H1 (cell line): ENCODE measurements at regions of chr3 and their contacts with region 1.

Region 1: DNA sequence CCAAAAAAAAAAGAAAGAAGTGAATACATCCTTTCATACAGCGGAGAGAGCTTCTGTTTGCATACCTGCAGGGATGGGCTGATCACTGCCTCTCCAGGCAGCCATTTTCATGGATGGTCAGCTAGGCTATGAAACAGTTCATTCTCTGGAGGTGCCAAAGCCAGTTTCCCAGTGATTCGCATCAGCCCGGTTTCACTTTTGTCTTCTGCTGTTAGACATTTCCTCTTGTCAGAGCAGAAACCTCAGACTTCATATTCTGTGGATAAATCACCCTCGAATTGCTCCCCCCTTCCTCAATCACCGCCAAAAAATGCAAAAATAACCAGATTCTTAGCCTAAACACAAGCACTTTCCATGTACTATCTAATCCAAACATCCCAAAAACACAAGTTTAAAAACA is 225.6 kb downstream of the ADAMTS9 start:
- DNase-seq: no peak
- H3K4me3 ChIP-seq: no peak overlapping the region
- H3K27ac ChIP-seq: no peak overlapping the region
- H3K4me1 ChIP-seq: peaks cover 1 to 8% (median 2%) of the 10 kb centered on the region in 4 experiments; a peak in 3 of 7 replicates
- H3K27me3 ChIP-seq: no peaks in the 10 kb centered on the region
- CTCF ChIP-seq: no peak
- EP300 ChIP-seq: no peak
- POLR2A ChIP-seq: no peak
- RAD21 ChIP-seq: no peak

Region 2: GRCh38 chr3:64321747-64322146 is 140.5 kb before region 1 on chr3:
- CTCF ChIA-PET with region 1: interaction called, 11 read pairs
- POLR2A ChIA-PET with region 1: no interaction called
- DNase-seq: no peak
- H3K4me3 ChIP-seq: no peak overlapping the region
- H3K27ac ChIP-seq: no peak overlapping the region
- H3K4me1 ChIP-seq: peaks cover 0 to 3% (median 0%) of the 10 kb centered on the region in 4 experiments; a peak in 2 of 7 replicates
- H3K27me3 ChIP-seq: no peaks in the 10 kb centered on the region
- CTCF ChIP-seq: no peak
- EP300 ChIP-seq: no peak
- POLR2A ChIP-seq: no peak
- RAD21 ChIP-seq: no peak

Region 3: GRCh38 chr3:64431526-64432091 is 30.6 kb before region 1 on chr3:
- CTCF ChIA-PET with region 1: interaction called, 10 read pairs
- POLR2A ChIA-PET with region 1: interaction called, 3 read pairs
- DNase-seq: no peak
- H3K4me3 ChIP-seq: no peak overlapping the region
- H3K27ac ChIP-seq: no peak overlapping the region
- H3K4me1 ChIP-seq: 0 out of 7 replicates have a peak, but pooled peaks cover 0 to 3% (median 0%) of the 10 kb centered on the region in 4 experiments
- H3K27me3 ChIP-seq: no peaks in the 10 kb centered on the region
- CTCF ChIP-seq: no peak
- EP300 ChIP-seq: no peak
- POLR2A ChIP-seq: no peak
- RAD21 ChIP-seq: no peak

Region 4: GRCh38 chr3:64445321-64446300 is 16.6 kb before region 1 on chr3:
- CTCF ChIA-PET with region 1: interaction called, 63 read pairs
- POLR2A ChIA-PET with region 1: interaction called, 3 read pairs
- DNase-seq: peak; percentile 54 to 90
- H3K4me3 ChIP-seq: peak overlapping the region; percentile 63 to 82 (median 74)
- H3K27ac ChIP-seq: no peak overlapping the region
- H3K4me1 ChIP-seq: peaks cover 4 to 25% (median 17%) of the 10 kb centered on the region in 4 experiments
- H3K27me3 ChIP-seq: no peaks in the 10 kb centered on the region; a peak in 2 of 7 replicates
- CTCF ChIP-seq: no peak
- EP300 ChIP-seq: no peak
- POLR2A ChIP-seq: 0 out of 3 replicates have a peak, but pooled peaks of 1 of the 2 experiments have one; percentile 24
- RAD21 ChIP-seq: no peak; a peak in 1 of 4 replicates

Region 5: DNA sequence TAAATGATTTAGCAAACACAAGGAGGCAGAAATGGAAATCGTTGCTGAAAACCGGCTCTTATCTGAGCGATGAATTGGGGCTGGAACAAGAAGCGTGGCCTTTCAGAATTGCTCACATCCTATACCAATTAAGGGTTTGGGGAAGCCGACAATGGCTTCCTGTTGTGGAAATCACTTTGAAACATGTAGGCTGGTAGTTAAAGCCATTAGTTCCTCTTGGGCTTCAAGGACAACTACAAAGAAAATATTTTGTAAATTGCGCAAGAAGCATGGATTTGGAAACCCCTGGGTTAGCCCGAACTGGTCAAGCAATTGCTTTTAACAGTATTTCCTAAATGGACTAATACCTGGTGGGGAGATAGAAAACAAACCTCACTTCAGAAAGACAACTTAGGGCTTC is 43.2 kb after region 1 on chr3:
- CTCF ChIA-PET with region 1: no interaction called
- POLR2A ChIA-PET with region 1: no interaction called
- DNase-seq: no peak
- H3K4me3 ChIP-seq: no peak overlapping the region
- H3K27ac ChIP-seq: no peak overlapping the region
- H3K4me1 ChIP-seq: no peaks in the 10 kb centered on the region
- H3K27me3 ChIP-seq: no peaks in the 10 kb centered on the region
- CTCF ChIP-seq: no peak
- EP300 ChIP-seq: no peak
- POLR2A ChIP-seq: no peak
- RAD21 ChIP-seq: no peak

Region 6: GRCh38 chr3:64520334-64520733 is 58.1 kb after region 1 on chr3:
- CTCF ChIA-PET with region 1: no interaction called
- POLR2A ChIA-PET with region 1: no interaction called
- DNase-seq: no peak
- H3K4me3 ChIP-seq: no peak overlapping the region
- H3K27ac ChIP-seq: no peak overlapping the region
- H3K4me1 ChIP-seq: no peaks in the 10 kb centered on the region
- H3K27me3 ChIP-seq: no peaks in the 10 kb centered on the region
- CTCF ChIP-seq: no peak
- EP300 ChIP-seq: no peak
- POLR2A ChIP-seq: no peak
- RAD21 ChIP-seq: no peak